Lower leg skin (tissue), 4 donors: ENCODE measurements at regions of chr10 and their contacts with region 1.

Region 1: DNA sequence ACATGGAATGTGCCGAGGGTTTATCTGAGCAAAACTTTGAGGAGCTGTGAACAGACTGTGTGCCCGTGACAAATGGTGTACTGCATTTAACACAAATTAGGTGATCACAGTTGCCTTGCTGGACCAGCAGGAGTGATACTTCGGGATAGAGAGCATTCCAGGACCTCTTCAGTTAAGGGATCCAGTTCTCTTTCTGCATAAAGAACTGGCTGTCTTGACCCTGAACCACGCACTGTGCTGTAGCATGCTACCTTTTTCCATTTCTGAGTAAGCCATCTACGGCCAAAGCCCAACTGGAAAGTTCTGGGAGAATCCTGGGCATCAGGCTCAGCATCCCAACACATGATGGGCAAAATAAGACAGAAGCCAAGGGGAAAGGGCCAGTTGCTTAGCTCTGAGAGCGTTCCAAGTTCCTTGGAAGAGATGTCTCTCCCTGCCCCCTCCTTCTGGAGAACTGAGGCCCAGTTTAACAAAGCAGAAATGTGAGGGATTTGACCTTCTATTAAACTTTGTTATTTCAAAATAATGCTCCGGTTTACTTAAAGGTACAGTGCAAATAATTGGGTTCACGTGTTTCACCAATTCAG is 37.9 kb upstream of the ADD3 start:
- DNase-seq: no peak
- H3K4me3 ChIP-seq: no peak overlapping the region
- CTCF ChIP-seq: no peak
- POLR2A ChIP-seq: no peak

Region 2: DNA sequence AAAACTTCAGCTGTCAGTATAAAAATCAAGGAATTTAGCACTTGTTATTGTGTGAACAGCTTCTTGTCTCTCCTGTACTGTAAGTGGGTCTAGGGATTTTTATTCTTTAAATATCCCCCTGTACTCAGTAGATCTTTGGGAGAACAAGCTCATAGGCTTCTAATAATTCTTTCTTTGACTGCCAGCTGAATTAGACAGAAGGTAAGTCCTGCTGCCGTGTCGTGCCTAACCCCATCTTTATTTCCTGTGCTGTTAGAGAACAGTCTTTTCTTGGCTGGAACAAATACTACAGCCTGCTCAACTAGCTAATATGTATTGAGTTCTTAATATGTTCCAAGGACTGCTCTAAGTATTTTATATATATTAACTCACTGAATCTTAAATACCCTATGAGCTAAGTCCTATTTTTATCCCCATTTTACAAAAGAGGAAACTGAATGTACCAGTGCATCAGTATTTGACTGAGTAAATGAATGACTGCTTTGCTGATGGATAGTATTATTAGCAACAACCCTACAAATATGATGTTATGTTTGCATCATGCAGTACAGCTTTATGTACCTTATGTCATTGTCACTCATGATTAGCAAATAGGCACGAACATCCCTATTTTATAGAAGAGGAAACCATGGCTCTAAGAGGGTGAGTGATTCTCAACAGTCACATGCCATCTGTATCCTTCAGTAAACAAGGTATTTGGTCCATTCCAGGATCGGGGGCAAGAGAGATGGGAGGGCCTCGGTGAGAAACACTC is 522.4 kb after region 1 on chr10:
- intact Hi-C with region 1: loop called (anchors 2 kb)
- DNase-seq: no peak
- H3K4me3 ChIP-seq: no peak overlapping the region
- CTCF ChIP-seq: no peak
- POLR2A ChIP-seq: no peak